ENCODE measurements at regions of chr3 and their contacts with region 1.

Region 1: DNA sequence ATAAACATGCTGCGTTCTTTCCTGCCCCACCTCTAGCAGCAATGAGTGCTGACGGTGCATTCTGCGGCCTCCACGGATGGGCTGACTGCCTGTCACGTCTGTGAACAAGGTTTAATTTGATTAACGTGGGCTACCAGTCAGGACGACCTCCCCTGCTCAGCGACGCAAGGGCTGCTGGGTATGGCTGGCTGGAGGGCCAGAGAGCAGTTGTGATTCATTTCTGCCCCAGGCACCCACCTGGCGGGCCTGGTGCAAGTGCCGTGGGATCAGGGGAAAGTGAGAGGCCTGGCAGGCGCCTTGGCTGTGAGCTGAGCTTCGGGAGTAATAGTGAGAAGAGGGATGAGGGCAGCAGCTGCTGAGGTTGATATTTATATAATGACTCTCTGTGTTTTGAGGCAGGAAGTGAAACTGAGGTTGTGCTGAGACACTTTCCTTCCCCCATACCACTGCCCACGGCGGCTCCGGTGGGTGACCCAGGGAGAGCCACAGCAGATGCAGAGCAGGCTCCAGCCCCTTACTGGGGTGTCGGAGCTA is 190.4 kb upstream of the BCL6 start:
- DNase-seq: no peak
- H3K4me3 Mint-ChIP-seq: peak overlapping the region; percentile 40
- H3K27ac Mint-ChIP-seq: no peak overlapping the region
- H3K4me1 Mint-ChIP-seq: peaks cover 19% of the 10 kb centered on the region
- H3K27me3 Mint-ChIP-seq: peaks cover 13% of the 10 kb centered on the region

Region 2: DNA sequence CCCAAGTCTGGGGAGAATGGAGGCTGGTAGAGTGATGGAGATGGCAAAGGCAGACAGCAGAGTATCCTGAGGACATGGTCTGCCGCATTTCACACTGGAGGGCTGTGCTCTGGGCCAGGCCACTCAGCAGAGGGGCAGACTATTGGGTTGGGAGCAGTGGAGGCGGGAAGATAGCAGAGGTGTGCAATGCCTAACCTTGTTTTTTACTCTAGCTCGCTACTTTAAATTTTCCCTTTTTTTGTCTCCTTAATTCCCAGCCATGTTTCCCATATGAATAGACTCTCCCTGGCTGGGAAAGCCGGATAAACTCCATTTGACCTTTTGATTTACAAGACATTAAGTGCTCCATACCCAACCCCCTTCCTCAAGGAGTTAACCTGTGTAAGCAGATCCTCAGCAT is 1038.8 kb before region 1 on chr3:
- intact Hi-C with region 1: no loop called
- DNase-seq: no peak
- H3K4me3 Mint-ChIP-seq: no peak overlapping the region
- H3K27ac Mint-ChIP-seq: no peak overlapping the region
- H3K4me1 Mint-ChIP-seq: peaks cover 23% of the 10 kb centered on the region
- H3K27me3 Mint-ChIP-seq: no peaks in the 10 kb centered on the region

Region 3: GRCh38 chr3:187767266-187768012 is 168.3 kb before region 1 on chr3:
- intact Hi-C with region 1: no loop called
- DNase-seq: no peak
- H3K4me3 Mint-ChIP-seq: no peak overlapping the region
- H3K27ac Mint-ChIP-seq: no peak overlapping the region
- H3K4me1 Mint-ChIP-seq: peaks cover 37% of the 10 kb centered on the region
- H3K27me3 Mint-ChIP-seq: peaks cover 4% of the 10 kb centered on the region

Region 4: GRCh38 chr3:187951452-187952190 is 15.9 kb after region 1 on chr3:
- intact Hi-C with region 1: loop called (anchors 2 kb)
- DNase-seq: no peak
- H3K4me3 Mint-ChIP-seq: no peak overlapping the region
- H3K27ac Mint-ChIP-seq: no peak overlapping the region
- H3K4me1 Mint-ChIP-seq: peaks cover 46% of the 10 kb centered on the region
- H3K27me3 Mint-ChIP-seq: no peaks in the 10 kb centered on the region

Region 5: GRCh38 chr3:187958432-187959003 is 22.8 kb after region 1 on chr3:
- intact Hi-C with region 1: loop called (anchors 1 kb)
- DNase-seq: peak; percentile 35
- H3K4me3 Mint-ChIP-seq: peak overlapping the region; percentile 61
- H3K27ac Mint-ChIP-seq: peak overlapping the region; percentile 57
- H3K4me1 Mint-ChIP-seq: peaks cover 50% of the 10 kb centered on the region
- H3K27me3 Mint-ChIP-seq: no peaks in the 10 kb centered on the region

Measured in activated T-helper 1 cell treated with anti-CD3 and anti-CD28 coated beads, Interleukin-12 subunit alpha, Interleukin-12 subunit beta, Interleukin-2, Interleukin-4 antibody, amounts not matched to agents 30 ng/mL and 10 ng/mL and 1 ng/mL, durations not matched to agents 14 hours and 24 hours and 36 hours (primary cell).